A673 (cell line): ENCODE measurements at regions of chr3 and their contacts with region 1.

Region 1: DNA sequence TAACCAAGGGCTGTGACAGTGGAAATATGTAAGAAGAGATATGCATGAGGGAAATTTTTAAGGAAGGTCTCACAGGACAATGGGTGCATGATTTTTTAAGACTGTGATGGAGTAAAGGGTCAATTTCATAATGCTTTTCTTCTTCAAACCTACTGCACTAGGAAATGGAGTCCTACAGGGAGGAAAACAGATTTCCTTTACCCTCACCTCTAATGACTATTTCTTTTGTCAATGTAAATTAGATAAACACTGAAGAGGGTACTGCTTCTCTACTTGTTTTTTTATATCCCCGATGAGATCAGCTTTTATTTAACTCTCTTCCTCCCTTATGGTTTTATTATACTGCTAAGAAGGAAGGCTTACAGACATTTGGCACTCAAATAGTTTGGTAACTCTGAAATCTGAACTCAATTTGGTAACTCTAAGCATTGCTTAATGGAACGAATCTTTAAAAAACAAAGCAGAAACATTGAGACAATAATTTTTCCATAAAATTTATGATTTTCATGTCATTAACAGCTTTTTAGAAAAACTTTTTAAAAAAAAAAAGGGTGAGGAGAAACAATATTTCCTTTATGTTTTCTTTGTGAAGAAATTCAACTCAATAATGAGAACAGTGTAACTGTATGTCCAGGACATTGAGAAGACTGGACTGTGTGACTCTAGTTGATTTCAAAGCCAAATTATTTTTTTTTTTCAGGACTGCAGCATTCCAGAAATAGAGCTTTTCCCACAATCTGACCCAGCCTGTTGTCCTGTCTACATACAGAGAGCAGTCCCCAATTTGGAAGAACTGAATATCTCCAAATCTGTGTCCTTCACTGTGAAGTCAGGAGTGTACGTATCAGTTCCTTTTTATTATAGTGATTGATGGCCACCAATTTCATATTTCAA is 64.4 kb downstream of the CRYBG3 start:
- DNase-seq: peak; percentile 91
- H3K4me3 ChIP-seq: no peak overlapping the region
- H3K27ac ChIP-seq: peak overlapping the region; percentile 51
- H3K4me1 ChIP-seq: peaks cover 37% of the 10 kb centered on the region
- H3K27me3 ChIP-seq: no peaks in the 10 kb centered on the region
- CTCF ChIP-seq: no peak

Region 2: GRCh38 chr3:97821810-97822775 is 64.1 kb before region 1 on chr3 and contains the start of gene CRYBG3:
- CTCF ChIA-PET with region 1: no interaction called
- POLR2A ChIA-PET with region 1: no interaction called
- intact Hi-C with region 1: loop called (anchors 5 kb)
- DNase-seq: peak; percentile 90
- H3K4me3 ChIP-seq: peak within 1 kb of the TSS; percentile 70
- H3K27ac ChIP-seq: peak within 1 kb of the TSS; percentile 55
- H3K4me1 ChIP-seq: peaks cover 7% of the 10 kb centered on the region
- H3K27me3 ChIP-seq: peaks cover 22% of the 10 kb centered on the region
- CTCF ChIP-seq: 0 out of 2 replicates have a peak, but pooled peaks have one; percentile 26
- total RNA-seq, gene CRYBG3: 8.6 and 8.7 TPM in 2 replicates